Cardiac septum (tissue), 1 donor: ENCODE measurements at regions of chr18 and their contacts with region 1.

Region 1: GRCh38 chr18:77087393-77088141 is 45.0 kb downstream of the MBP start:
- DNase-seq: no peak

Region 2: DNA sequence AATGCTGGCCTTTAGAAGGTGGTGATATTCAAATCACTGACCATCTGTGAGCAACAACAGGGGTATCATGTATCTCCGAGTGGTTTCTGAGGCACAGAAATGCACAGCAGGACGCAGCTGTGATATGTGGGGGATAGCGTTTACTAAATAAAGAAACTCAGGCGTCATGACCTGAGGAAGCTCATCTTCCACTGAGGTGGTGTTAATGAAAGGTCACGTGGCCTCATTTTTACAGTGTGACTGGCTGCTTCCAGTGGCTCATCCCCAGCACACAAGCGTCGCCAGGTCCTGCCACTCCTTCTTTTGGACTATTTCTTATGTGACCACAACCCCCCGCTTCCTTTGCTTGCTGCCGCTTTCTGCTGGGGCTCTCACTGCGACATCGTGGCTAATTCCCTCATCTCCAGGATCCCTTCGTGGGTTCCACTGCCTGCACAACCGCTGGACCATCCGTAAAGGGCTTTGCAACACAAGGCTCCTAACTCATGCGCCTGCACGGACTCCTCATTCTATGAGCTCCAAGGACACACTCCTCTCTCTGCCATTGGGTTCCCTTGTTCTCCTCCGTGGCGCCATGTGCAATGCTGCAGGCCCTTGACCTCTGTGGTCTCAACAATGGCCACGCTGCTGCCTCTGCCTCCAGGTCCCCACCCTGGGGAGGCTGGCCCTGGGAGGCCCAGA is 64.3 kb before region 1 on chr18:
- intact Hi-C with region 1: no loop called
- DNase-seq: no peak

Region 3: DNA sequence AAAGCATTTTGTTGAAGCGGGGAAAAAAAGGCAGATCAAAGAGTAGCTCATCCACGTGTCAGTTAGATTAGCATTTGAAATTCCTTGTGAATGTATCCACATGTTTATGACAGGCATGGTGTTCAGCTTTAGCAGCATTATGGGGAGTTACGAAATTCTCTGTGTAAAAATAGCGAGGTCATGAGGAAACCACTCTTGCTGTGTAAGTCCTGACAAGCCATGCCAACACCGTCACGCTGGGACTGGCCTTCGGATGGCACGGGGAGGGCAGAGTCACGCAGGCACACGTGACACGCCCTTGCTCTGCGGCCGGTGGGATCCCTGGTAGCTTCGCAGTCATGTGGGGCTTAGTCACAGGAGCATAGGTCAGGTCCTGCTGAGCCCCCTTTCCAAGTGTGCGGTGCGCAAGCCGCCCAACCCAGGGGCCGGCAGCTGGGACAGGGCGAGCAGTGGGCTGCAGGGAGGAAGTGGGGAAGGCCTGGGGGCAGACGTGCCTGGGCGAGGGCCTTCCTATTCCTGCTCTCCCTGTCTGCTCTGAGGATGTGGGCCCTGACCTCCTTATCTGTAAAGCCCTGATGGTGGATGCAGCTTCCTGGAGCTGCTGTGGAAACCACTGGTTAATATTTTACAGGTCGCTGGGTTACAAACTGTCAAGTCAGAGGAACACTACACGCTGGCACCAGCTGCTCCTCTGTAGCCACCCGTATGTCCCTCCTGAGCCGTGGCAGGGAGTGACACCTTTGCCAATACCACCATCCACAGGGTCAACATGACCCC is 27.0 kb after region 1 on chr18:
- intact Hi-C with region 1: loop called (anchors 1 kb)
- DNase-seq: peak; percentile 97